B cell (primary cell): ENCODE measurements at regions of chr18 and their contacts with region 1.

Region 1: DNA sequence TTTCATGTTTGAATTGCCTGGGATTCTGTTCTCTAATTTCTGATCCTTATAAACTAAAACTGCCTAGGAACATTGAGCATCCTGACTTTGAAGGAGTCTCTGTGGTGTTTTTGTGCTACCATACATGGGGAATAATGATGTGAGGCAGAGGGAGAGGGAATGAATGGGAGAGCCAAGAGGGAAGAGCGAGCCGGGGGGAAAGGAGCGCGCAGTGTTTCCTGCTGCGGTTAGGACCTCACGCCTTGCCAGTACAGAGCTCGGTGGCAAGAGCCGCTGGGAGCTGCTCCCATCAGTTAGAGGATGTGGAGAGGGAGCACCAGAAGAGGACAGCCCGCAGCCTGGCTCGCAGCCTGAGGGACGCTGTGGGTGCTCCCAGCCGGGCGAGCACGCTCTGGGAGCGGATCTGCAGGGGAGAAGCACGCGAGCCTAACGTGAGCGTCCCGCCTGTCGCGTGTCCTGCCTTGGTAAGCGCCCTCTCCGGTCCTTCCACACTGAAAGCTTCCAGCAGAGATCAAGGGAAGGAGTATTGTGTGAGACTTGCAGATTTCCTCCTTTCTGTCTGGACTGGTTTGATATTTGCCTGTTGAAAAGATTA is 114.7 kb downstream of the FAM210A start:
- DNase-seq: no peak
- ATAC-seq: peak; percentile 5
- H3K4me3 ChIP-seq: peak overlapping the region; percentile 48 to 71 (median 62)
- H3K4me3 Mint-ChIP-seq: peak overlapping the region; percentile 86
- H3K27ac ChIP-seq: peak overlapping the region; percentile 29 to 86
- H3K27ac Mint-ChIP-seq: peak overlapping the region; percentile 94
- H3K4me1 ChIP-seq: peaks cover 68 to 81% of the 10 kb centered on the region in 2 donors
- H3K4me1 Mint-ChIP-seq: peaks cover 84% of the 10 kb centered on the region
- H3K27me3 ChIP-seq: no peaks in the 10 kb centered on the region
- H3K27me3 Mint-ChIP-seq: no peaks in the 10 kb centered on the region
- CTCF ChIP-seq: no peak

Region 2: DNA sequence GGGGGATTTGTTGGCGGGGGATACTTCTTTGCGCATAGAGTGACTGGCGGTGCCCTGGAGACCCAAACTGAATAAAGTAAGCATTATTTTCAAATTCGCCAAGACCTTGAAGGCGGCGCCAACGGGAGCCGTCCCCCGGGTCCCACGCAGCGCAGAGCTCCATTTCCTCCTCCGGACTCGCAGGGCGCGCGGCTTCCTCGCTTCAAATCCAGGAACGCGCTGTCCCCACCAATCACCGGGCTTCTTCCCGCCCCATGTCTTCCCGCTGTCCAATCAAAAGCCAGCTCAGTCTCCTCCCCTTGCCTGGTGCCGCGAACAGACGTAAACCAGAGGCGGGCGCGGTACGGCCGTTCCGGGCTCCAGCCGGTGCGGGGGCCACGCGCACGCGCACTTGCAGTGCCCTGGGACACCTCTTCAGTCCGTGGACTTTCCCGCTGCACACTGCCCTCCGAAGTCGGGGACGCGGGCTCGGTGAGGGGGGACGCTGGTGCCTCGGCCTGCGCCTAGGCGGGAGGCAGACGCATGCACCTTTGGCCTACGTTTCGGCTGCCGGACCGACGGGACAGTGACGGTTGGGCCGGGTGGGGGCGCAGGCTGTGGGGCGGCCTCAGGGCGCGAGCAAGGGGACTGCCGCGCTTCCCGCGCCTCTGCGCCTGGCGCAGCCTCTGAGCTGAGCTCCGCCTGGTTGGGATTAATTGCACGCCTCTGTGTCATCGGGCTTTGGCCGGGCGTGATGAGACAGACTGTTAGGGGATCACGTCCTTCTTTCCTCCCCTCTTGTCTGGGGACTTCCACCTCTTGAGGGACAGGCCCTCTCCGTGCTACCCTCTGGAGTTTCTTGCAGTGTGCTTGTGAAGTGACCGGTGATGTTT is 620.5 kb before region 1 on chr18 and contains the start of gene CEP192:
- CTCF ChIA-PET with region 1: no interaction called
- POLR2A ChIA-PET with region 1: no interaction called
- intact Hi-C with region 1: loop called (anchors 5 kb)
- DNase-seq: peak; percentile 98
- ATAC-seq: peak; percentile 98
- H3K4me3 ChIP-seq: peak within 1 kb of the TSS; percentile 63 to 97 (median 84)
- H3K4me3 Mint-ChIP-seq: peak within 1 kb of the TSS; percentile 99
- H3K27ac ChIP-seq: peak within 1 kb of the TSS; percentile 67 to 88
- H3K27ac Mint-ChIP-seq: peak within 1 kb of the TSS; percentile 97
- H3K4me1 ChIP-seq: peaks cover 19 to 25% of the 10 kb centered on the region in 2 donors
- H3K4me1 Mint-ChIP-seq: peaks cover 36% of the 10 kb centered on the region
- H3K27me3 ChIP-seq: no peaks in the 10 kb centered on the region
- H3K27me3 Mint-ChIP-seq: no peaks in the 10 kb centered on the region
- CTCF ChIP-seq: peak; percentile 36
- total RNA-seq, gene CEP192: 44.3 and 47.3 TPM in 2 replicates

Region 3: DNA sequence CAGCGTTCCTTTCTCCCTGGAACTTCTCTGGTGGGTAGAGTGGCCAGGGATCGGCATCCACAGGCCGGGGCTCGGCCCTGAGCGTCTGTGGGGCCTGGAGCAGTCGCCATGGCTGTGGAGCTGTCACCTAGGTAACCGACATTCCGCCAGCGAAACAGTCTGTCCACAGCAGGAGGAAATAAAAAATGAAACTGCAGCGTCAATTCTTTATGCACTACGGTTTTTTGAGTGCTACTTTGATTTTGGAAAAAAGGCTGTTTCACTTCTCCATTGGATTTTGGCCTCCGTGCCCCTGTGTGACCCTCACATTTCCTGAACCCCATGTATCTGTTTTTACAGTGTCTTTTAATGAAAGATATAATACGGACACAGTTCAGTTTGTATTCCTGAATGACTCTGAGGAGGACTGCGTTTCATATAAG is 229.7 kb before region 1 on chr18:
- CTCF ChIA-PET with region 1: no interaction called
- POLR2A ChIA-PET with region 1: no interaction called
- intact Hi-C with region 1: loop called (anchors 5 kb)
- DNase-seq: peak; percentile 71
- ATAC-seq: peak; percentile 70
- H3K4me3 ChIP-seq: peak overlapping the region; percentile 18 to 61 (median 40)
- H3K4me3 Mint-ChIP-seq: peak overlapping the region; percentile 82
- H3K27ac ChIP-seq: peak overlapping the region; percentile 53 to 79
- H3K27ac Mint-ChIP-seq: peak overlapping the region; percentile 80
- H3K4me1 ChIP-seq: peaks cover 16 to 19% of the 10 kb centered on the region in 2 donors
- H3K4me1 Mint-ChIP-seq: peaks cover 27% of the 10 kb centered on the region
- H3K27me3 ChIP-seq: no peaks in the 10 kb centered on the region
- H3K27me3 Mint-ChIP-seq: no peaks in the 10 kb centered on the region
- CTCF ChIP-seq: no peak

Region 4: DNA sequence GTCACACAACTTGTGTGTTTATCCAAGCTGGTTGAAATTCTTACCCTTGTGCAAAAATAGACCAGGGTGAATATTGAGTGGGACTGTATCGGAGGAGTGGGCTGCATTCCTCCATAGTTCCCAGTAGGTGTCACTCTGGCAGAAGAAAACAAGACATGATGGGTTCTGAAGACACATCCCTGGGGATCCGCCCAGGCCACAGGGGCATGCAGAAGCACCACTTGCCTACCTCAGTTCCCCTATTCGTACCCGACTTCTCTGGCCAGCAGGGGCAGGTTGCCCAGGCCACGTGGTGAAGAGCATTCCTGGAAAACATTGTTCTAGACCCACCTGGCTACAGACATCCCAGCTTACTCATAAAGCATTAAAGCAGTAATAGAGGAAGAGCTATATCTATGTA is 53.6 kb before region 1 on chr18:
- CTCF ChIA-PET with region 1: interaction called, 195 read pairs
- POLR2A ChIA-PET with region 1: interaction called, 21 read pairs
- intact Hi-C with region 1: loop called (anchors 1 kb)
- DNase-seq: peak; percentile 84
- ATAC-seq: peak; percentile 65
- H3K4me3 ChIP-seq: no peak overlapping the region
- H3K4me3 Mint-ChIP-seq: peak overlapping the region; percentile 48
- H3K27ac ChIP-seq: no peak overlapping the region
- H3K27ac Mint-ChIP-seq: peak overlapping the region; percentile 71
- H3K4me1 ChIP-seq: peaks cover 19 to 24% of the 10 kb centered on the region in 2 donors
- H3K4me1 Mint-ChIP-seq: peaks cover 29% of the 10 kb centered on the region
- H3K27me3 ChIP-seq: no peaks in the 10 kb centered on the region
- H3K27me3 Mint-ChIP-seq: no peaks in the 10 kb centered on the region
- CTCF ChIP-seq: peak; percentile 77

Region 5: DNA sequence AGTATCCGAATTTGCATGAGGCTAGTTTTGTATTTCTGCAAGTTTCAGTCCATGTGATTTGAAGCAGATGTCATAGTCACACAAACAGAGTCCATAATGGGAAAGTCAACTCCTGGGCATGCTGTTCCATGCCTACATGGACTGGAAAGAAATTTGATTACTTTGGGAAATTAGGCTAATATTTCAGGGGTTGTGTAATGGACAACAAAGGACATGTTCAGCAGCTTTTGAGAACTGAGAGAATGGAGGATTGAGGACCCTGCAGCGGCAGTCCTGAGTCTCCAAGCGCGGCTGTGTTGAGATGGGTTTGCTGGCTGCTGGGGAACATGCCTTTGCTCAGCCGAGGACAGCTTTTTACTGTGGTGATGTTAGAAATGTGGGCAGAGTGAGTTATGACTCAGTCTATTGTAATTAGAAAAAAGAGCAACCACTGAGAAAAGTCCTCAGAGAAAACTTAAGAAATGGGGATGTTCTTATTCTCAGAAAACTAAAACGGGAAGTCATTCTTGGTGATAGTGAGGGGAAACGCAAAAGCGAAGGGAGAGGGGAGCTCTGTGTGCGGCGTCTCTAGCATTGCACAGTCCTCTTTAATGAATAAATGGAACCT is 34.5 kb before region 1 on chr18:
- CTCF ChIA-PET with region 1: interaction called, 15 read pairs
- POLR2A ChIA-PET with region 1: interaction called, 22 read pairs
- intact Hi-C with region 1: no loop called
- DNase-seq: peak; percentile 73
- ATAC-seq: peak; percentile 87
- H3K4me3 ChIP-seq: peak overlapping the region in 4 of 5 experiments; percentile 28 to 66 (median 47)
- H3K4me3 Mint-ChIP-seq: peak overlapping the region; percentile 73
- H3K27ac ChIP-seq: peak overlapping the region; percentile 51 to 58
- H3K27ac Mint-ChIP-seq: peak overlapping the region; percentile 76
- H3K4me1 ChIP-seq: peaks cover 29 to 39% of the 10 kb centered on the region in 2 donors
- H3K4me1 Mint-ChIP-seq: peaks cover 45% of the 10 kb centered on the region
- H3K27me3 ChIP-seq: no peaks in the 10 kb centered on the region
- H3K27me3 Mint-ChIP-seq: no peaks in the 10 kb centered on the region
- CTCF ChIP-seq: no peak

Region 6: DNA sequence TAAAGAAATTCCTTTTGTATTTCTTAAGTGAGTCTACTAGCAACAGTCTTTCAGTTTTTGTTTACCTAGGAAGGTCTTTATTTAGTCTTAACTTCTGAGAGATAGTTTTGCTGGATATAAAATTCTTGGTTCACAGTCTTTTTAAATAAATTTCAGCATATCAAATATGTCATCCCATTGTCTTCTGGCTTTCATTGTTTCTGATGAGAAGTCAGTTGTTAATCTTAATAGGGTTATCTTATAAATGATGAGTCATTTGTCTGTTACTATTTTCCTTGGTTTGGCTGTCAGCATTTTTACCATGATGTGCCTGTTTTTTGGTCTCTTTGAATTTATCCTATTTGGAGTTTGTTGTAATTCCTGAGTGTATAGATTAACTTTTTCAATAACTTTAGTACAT is 14.6 kb before region 1 on chr18:
- CTCF ChIA-PET with region 1: interaction called, 9 read pairs
- POLR2A ChIA-PET with region 1: interaction called, 4 read pairs
- intact Hi-C with region 1: loop called (anchors 2 kb)
- DNase-seq: peak; percentile 39
- ATAC-seq: no peak
- H3K4me3 ChIP-seq: no peak overlapping the region
- H3K4me3 Mint-ChIP-seq: no peak overlapping the region
- H3K27ac ChIP-seq: no peak overlapping the region
- H3K27ac Mint-ChIP-seq: no peak overlapping the region
- H3K4me1 ChIP-seq: peaks cover 0 to 3% of the 10 kb centered on the region in 2 donors
- H3K4me1 Mint-ChIP-seq: peaks cover 14% of the 10 kb centered on the region
- H3K27me3 ChIP-seq: no peaks in the 10 kb centered on the region
- H3K27me3 Mint-ChIP-seq: no peaks in the 10 kb centered on the region
- CTCF ChIP-seq: no peak